MCF 10A (cell line): ENCODE measurements at regions of chr15 and their contacts with region 1.

Region 1: GRCh38 chr15:94125156-94125555 is 106.2 kb upstream of the MCTP2 start:
- DNase-seq: no peak
- H3K4me3 Mint-ChIP-seq: no peak overlapping the region
- H3K27ac Mint-ChIP-seq: no peak overlapping the region
- H3K4me1 Mint-ChIP-seq: no peaks in the 10 kb centered on the region
- H3K27me3 Mint-ChIP-seq: peaks cover 7% of the 10 kb centered on the region
- CTCF ChIP-seq: no peak

Region 2: GRCh38 chr15:93997084-93997918 is 127.9 kb before region 1 on chr15:
- CTCF ChIA-PET with region 1: interaction called, 102 read pairs
- POLR2A ChIA-PET with region 1: interaction called, 6 read pairs
- intact Hi-C with region 1: loop called (anchors 1 kb)
- DNase-seq: peak; percentile 51
- H3K4me3 Mint-ChIP-seq: no peak overlapping the region
- H3K27ac Mint-ChIP-seq: no peak overlapping the region
- H3K4me1 Mint-ChIP-seq: no peaks in the 10 kb centered on the region
- H3K27me3 Mint-ChIP-seq: no peaks in the 10 kb centered on the region
- CTCF ChIP-seq: peak; percentile 80

Region 3: GRCh38 chr15:94154245-94154644 is 29.1 kb after region 1 on chr15:
- CTCF ChIA-PET with region 1: no interaction called
- POLR2A ChIA-PET with region 1: no interaction called
- intact Hi-C with region 1: no loop called
- DNase-seq: no peak
- H3K4me3 Mint-ChIP-seq: no peak overlapping the region
- H3K27ac Mint-ChIP-seq: no peak overlapping the region
- H3K4me1 Mint-ChIP-seq: no peaks in the 10 kb centered on the region
- H3K27me3 Mint-ChIP-seq: no peaks in the 10 kb centered on the region
- CTCF ChIP-seq: peak; percentile 15